Activated naive CD4-positive, alpha-beta T cell treated with anti-CD3 and anti-CD28 coated beads for 36 hours (primary cell): ENCODE measurements at regions of chr11 and their contacts with region 1.

Region 1: DNA sequence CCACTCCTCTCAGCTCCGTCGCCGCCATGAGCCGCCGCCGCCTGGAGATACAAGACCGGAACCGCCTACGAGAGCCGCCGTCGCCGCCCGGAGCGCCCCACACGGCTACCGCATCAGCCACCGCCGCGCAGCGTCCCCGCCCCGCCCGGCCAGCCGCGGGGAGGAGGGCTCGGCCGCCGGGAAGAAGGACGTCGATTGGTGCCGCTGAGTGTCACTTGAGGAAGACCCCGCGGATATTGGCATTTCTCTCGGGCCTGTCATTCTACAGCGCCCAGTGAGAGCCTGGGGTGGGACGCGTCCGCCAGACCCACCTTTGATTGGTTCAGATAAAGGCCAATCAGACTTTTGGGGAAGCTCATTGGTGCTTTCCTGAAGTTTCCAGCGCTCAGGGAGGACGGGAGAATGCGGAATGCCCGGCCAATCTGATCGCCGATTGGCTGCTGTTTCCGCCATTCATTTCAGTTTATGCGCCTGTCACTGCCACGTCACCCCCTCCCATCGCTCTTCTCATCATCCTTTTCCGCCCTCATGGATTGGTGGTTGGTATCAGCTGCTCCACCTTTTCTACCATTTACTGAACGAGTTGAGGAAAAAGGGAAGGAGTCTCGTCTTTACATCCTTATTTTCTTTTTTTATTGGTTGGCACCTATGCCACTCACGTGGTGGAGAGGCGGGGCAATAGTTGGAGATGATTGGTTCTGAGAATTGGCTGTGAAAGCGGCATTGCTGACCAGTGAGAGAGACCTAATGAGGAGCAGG is at the start of gene OSBP:
- DNase-seq: peak; percentile 99
- H3K4me3 Mint-ChIP-seq: peak within 1 kb of the TSS; percentile 81
- H3K27ac Mint-ChIP-seq: peak within 1 kb of the TSS; percentile 86
- H3K4me1 Mint-ChIP-seq: peaks cover 35% of the 10 kb centered on the region
- H3K27me3 Mint-ChIP-seq: no peaks in the 10 kb centered on the region
- total RNA-seq, gene OSBP: 33.9 to 37.0 TPM

Region 2: DNA sequence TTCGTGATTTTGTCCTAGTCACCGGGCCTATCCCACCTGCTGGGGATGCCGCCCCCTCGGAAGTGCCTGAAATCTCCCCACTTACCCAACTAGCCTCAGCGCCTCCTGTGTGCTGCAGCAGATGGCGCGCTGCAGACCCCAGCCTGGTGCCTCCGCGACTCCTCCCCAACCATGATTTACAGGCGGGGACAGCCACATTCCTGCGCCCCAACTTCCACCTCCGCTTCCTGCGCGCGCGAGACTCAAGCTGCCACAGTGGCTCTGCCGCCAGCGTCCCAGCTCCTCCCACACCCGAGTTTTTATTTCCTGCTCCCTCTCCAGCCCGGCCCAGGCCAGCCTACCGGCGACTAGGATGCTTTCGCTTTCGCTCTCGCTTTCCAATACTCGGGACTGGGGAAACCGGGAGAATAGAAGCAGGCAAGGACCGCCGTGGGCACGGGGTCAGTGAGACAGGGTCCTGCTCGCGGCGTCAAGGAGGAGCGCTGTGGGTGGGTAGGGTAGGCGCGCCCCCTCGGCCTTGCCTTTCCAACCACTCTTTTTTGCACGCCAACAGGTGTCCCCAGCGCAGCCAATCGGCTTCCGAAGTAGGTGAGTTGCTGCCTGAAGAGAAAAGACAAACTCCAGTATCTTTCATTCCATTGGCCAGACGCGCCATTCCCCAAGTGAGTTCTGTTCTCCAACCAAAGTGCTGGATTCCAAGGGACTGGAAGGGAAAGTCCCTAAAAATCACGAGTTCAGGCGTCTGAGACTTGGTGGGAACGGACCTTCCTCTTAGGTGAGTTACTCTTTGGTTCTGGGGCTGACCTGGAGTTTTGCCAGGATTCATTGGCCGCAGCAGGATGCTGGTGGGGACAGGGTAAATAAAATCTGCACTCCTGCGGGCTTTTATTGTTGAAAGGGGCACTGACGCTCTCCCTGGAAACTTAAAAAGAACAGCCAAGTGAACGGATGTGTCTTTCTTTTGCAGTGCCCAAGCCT is 473.0 kb before region 1 on chr11 and contains the start of gene FAM111A:
- CTCF ChIA-PET with region 1: no interaction called
- intact Hi-C with region 1: loop called (anchors 1 kb)
- DNase-seq: peak; percentile 88
- H3K4me3 Mint-ChIP-seq: peak within 1 kb of the TSS; percentile 95
- H3K27ac Mint-ChIP-seq: peak within 1 kb of the TSS; percentile 91
- H3K4me1 Mint-ChIP-seq: peaks cover 40% of the 10 kb centered on the region
- H3K27me3 Mint-ChIP-seq: no peaks in the 10 kb centered on the region
- total RNA-seq, gene FAM111A: 98.3 to 99.4 TPM

Region 3: GRCh38 chr11:59550368-59550841 is 65.4 kb before region 1 on chr11:
- CTCF ChIA-PET with region 1: no interaction called
- intact Hi-C with region 1: loop called (anchors 1 kb)
- DNase-seq: peak; percentile 93
- H3K4me3 Mint-ChIP-seq: peak overlapping the region; percentile 79
- H3K27ac Mint-ChIP-seq: peak overlapping the region; percentile 93
- H3K4me1 Mint-ChIP-seq: peaks cover 27% of the 10 kb centered on the region
- H3K27me3 Mint-ChIP-seq: peaks cover 5% of the 10 kb centered on the region

Region 4: GRCh38 chr11:59810189-59810910 is 194.5 kb after region 1 on chr11 and contains the start of gene MRPL16:
- CTCF ChIA-PET with region 1: no interaction called
- intact Hi-C with region 1: loop called (anchors 1 kb)
- DNase-seq: peak; percentile 92
- H3K4me3 Mint-ChIP-seq: peak within 1 kb of the TSS; percentile 87
- H3K27ac Mint-ChIP-seq: peak within 1 kb of the TSS; percentile 82
- H3K4me1 Mint-ChIP-seq: peaks cover 18% of the 10 kb centered on the region
- H3K27me3 Mint-ChIP-seq: no peaks in the 10 kb centered on the region
- total RNA-seq, gene MRPL16: 59.5 to 63.2 TPM

Region 5: GRCh38 chr11:61161190-61162091 is 1545.6 kb after region 1 on chr11 and contains the start of gene VPS37C:
- CTCF ChIA-PET with region 1: no interaction called
- intact Hi-C with region 1: loop called (anchors 5 kb)
- DNase-seq: peak; percentile 91
- H3K4me3 Mint-ChIP-seq: peak within 1 kb of the TSS; percentile 94
- H3K27ac Mint-ChIP-seq: peak within 1 kb of the TSS; percentile 93
- H3K4me1 Mint-ChIP-seq: peaks cover 62% of the 10 kb centered on the region
- H3K27me3 Mint-ChIP-seq: no peaks in the 10 kb centered on the region
- total RNA-seq, gene VPS37C: 8.5 to 8.9 TPM